Activated CD8-positive, alpha-beta T cell treated with anti-CD3 and anti-CD28 coated beads for 36 hours (primary cell): ENCODE measurements at regions of chr2 and their contacts with region 1.

Region 1: DNA sequence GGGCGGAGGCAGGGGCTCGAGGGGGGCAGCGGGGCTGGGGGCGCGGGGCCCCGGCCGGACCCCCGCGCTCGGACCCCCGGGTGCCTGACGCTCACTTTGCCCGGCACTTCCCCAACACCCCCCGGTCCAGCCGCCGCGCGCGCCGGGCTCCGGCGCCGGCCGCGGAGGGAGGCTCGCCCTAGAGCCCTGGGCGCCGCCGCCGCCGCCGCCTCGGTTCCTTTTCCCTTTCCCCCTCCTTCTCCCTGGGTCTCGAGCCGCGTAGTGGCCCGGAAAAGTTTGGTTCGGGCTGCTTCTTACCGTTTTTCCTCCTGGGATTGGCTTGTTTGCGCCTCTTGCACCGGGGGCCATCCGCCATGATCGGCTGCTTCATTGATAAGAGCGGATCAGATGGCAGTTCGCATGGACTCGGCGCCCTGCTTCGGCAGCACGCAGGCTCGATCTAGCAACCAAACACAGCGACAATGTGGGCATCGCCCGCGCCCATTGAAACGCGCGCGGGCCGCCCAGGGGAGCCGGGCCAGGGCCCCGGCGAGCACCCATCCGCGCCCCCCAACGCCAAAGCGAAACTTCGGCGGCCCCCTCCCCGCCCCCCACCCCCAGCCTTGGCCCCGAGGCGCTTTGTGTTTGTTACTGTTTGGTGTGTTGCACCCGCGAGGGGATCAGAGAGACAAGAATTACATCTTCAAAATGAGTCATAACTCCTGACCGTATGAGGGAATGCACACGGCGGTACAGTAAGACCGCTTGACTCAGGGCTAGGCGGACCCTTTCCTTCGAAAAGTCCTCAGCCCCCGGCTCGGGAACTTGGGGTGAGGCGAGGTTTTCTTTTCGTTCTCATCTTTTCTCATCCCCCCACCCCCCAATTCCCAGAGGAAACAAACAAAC is 2.7 kb downstream of the ZEB2 start:
- DNase-seq: peak; percentile 80
- ATAC-seq: peak; percentile 72
- H3K4me3 Mint-ChIP-seq: no peak overlapping the region
- H3K27ac Mint-ChIP-seq: no peak overlapping the region
- H3K4me1 Mint-ChIP-seq: peaks cover 27% of the 10 kb centered on the region
- H3K27me3 Mint-ChIP-seq: peaks cover 31% of the 10 kb centered on the region
- CTCF ChIP-seq: no peak

Region 2: GRCh38 chr2:144183727-144184126 is 333.5 kb before region 1 on chr2:
- CTCF ChIA-PET with region 1: interaction called, 3 read pairs
- POLR2A ChIA-PET with region 1: no interaction called
- intact Hi-C with region 1: loop called (anchors 10 kb)
- DNase-seq: peak; percentile 92
- ATAC-seq: peak; percentile 99
- H3K4me3 Mint-ChIP-seq: peak overlapping the region; percentile 32
- H3K27ac Mint-ChIP-seq: peak overlapping the region; percentile 90
- H3K4me1 Mint-ChIP-seq: peaks cover 59% of the 10 kb centered on the region
- H3K27me3 Mint-ChIP-seq: no peaks in the 10 kb centered on the region
- CTCF ChIP-seq: no peak

Region 3: DNA sequence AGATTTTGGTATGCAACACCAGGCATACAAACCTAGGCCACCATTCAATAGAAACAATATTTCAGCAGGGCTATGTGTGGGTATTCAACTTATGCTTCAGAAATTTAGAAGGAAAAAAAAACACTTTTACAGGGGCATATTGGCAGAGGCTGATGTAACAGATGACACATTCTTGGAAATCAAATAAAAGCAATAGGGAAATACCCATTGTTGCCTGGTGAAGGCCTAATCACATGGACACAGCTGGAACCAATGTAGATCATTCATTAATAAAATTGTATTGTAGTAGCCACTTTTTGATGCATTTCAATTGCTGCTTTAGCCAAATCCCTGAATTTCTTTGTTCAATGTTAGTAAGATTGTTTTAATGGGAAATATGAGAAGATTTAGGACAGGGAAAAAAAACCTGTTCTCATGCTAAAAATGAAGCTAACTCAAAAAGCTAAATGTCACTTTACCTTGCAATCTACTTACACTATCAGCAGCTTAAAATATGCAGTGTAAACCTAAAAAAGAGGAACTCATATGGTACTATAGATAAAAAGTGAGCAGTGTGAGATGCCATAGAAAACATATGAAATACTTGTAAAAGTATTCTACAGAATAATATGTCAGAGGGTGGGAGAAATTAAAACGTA is 286.7 kb before region 1 on chr2:
- CTCF ChIA-PET with region 1: no interaction called
- POLR2A ChIA-PET with region 1: no interaction called
- intact Hi-C with region 1: loop called (anchors 10 kb)
- DNase-seq: no peak
- ATAC-seq: peak; percentile 63
- H3K4me3 Mint-ChIP-seq: no peak overlapping the region
- H3K27ac Mint-ChIP-seq: peak overlapping the region; percentile 77
- H3K4me1 Mint-ChIP-seq: peaks cover 62% of the 10 kb centered on the region
- H3K27me3 Mint-ChIP-seq: no peaks in the 10 kb centered on the region
- CTCF ChIP-seq: no peak

Region 4: GRCh38 chr2:144332356-144333142 is 184.7 kb before region 1 on chr2:
- CTCF ChIA-PET with region 1: interaction called, 3 read pairs
- POLR2A ChIA-PET with region 1: no interaction called
- intact Hi-C with region 1: loop called (anchors 5 kb)
- DNase-seq: peak; percentile 85
- ATAC-seq: peak; percentile 87
- H3K4me3 Mint-ChIP-seq: peak overlapping the region; percentile 95
- H3K27ac Mint-ChIP-seq: peak overlapping the region; percentile 91
- H3K4me1 Mint-ChIP-seq: peaks cover 40% of the 10 kb centered on the region
- H3K27me3 Mint-ChIP-seq: no peaks in the 10 kb centered on the region
- CTCF ChIP-seq: no peak

Region 5: DNA sequence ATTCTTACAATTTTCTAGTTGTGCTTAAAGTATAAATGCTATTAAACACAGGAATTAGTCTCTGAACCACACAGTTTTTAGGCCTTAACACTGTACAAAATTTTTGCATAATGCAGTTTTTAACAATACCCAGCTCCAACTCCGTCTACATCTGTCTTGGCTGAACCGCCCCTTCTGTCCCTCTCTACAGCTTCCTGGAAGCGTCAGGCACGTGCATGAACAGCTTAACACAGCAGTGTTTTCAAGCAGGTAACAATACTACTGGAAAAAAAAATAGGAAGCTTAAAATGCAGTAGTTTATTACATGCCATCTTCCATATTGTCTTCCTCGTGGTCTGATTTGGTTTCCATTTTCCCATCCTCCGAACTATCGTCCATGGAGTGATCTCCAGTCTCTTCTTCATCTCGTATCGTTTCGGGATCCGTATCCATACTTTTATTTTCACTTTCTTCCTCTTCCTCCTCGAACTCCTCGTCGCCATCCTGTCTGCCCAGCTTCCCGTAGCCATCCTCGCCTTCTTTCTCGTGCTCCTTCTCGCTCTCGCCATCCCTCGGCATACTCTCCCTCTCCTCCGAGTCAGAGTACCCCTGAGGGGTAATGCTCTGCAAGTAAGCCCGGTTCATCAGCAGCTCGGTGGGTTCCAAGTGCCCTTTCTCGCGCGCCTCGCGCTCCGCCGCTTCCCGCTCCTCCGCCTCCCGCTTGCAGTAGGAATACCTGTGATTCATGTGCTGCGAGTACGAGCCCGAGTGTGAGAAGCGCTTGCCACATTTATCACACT is 127.9 kb before region 1 on chr2:
- CTCF ChIA-PET with region 1: no interaction called
- POLR2A ChIA-PET with region 1: no interaction called
- intact Hi-C with region 1: no loop called
- DNase-seq: no peak
- ATAC-seq: no peak
- H3K4me3 Mint-ChIP-seq: no peak overlapping the region
- H3K27ac Mint-ChIP-seq: no peak overlapping the region
- H3K4me1 Mint-ChIP-seq: peaks cover 2% of the 10 kb centered on the region
- H3K27me3 Mint-ChIP-seq: no peaks in the 10 kb centered on the region
- CTCF ChIP-seq: no peak

Region 6: GRCh38 chr2:144443837-144444817 is 73.1 kb before region 1 on chr2:
- CTCF ChIA-PET with region 1: no interaction called
- POLR2A ChIA-PET with region 1: no interaction called
- intact Hi-C with region 1: no loop called
- DNase-seq: no peak
- ATAC-seq: no peak
- H3K4me3 Mint-ChIP-seq: no peak overlapping the region
- H3K27ac Mint-ChIP-seq: no peak overlapping the region
- H3K4me1 Mint-ChIP-seq: peaks cover 16% of the 10 kb centered on the region
- H3K27me3 Mint-ChIP-seq: no peaks in the 10 kb centered on the region
- CTCF ChIP-seq: no peak

Region 7: GRCh38 chr2:144533221-144533620 is 16.0 kb after region 1 on chr2:
- CTCF ChIA-PET with region 1: interaction called, 10 read pairs
- POLR2A ChIA-PET with region 1: no interaction called
- intact Hi-C with region 1: no loop called
- DNase-seq: no peak
- ATAC-seq: no peak
- H3K4me3 Mint-ChIP-seq: no peak overlapping the region
- H3K27ac Mint-ChIP-seq: no peak overlapping the region
- H3K4me1 Mint-ChIP-seq: no peaks in the 10 kb centered on the region
- H3K27me3 Mint-ChIP-seq: peaks cover 15% of the 10 kb centered on the region
- CTCF ChIP-seq: no peak

Region 8: GRCh38 chr2:144560251-144560650 is 43.0 kb after region 1 on chr2:
- CTCF ChIA-PET with region 1: no interaction called
- POLR2A ChIA-PET with region 1: no interaction called
- intact Hi-C with region 1: no loop called
- DNase-seq: no peak
- ATAC-seq: no peak
- H3K4me3 Mint-ChIP-seq: no peak overlapping the region
- H3K27ac Mint-ChIP-seq: no peak overlapping the region
- H3K4me1 Mint-ChIP-seq: no peaks in the 10 kb centered on the region
- H3K27me3 Mint-ChIP-seq: peaks cover 3% of the 10 kb centered on the region
- CTCF ChIP-seq: no peak